Adrenal gland (tissue), 19 donors: ENCODE measurements at regions of chr15 and their contacts with region 1.

Region 1: GRCh38 chr15:80567721-80568157 is 127.4 kb upstream of the ABHD17C start:
- DNase-seq: peak; percentile 54 to 83 (median 65)
- H3K4me3 ChIP-seq: no peak overlapping the region
- H3K27ac ChIP-seq: no peak overlapping the region
- H3K4me1 ChIP-seq: no peaks in the 10 kb centered on the region
- H3K27me3 ChIP-seq: no peaks in the 10 kb centered on the region
- CTCF ChIP-seq: peak; percentile 55 to 81 (median 74)
- POLR2A ChIP-seq: no peak

Region 2: DNA sequence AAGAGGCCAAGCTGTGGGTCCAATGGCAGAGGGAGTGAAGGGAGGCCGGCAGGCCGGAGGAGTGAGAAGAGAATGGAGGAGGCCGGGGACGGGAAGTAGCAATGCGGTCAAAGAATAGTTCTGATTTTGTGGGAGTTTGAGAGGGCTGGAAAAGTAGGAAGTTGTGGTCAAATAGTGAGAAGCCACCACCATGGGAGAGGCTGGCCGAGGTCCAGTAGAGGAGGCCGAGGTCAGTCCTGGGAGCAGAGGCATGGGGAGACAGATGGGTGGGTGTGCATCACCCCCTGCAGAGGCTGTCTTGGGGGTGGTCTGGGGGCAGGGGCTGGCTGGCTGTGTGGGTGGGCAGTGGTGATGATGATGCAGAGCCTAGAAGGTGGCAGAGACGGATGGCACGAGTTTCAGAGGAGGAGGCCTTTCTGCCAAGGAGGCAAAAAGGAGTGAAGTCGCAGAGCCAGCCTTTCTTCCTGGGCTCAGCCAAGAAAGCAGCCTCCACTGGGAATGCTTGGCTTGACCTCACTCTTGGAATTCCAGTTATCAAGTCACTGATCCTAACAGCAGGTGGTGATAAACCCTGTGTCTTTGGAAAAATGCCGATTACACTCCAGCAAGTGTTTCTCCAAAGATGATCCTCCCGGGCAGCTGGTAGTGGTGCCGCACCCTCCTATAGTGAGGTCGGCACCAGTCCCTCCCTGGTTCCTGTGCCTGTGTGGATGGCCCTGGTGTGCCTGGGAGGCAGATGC is 106.2 kb before region 1 on chr15:
- intact Hi-C with region 1: loop called in 1 of 2 experiments (anchors 10 kb)
- DNase-seq: peak in 1 of 7 donors; percentile 27
- H3K4me3 ChIP-seq: no peak overlapping the region
- H3K27ac ChIP-seq: no peak overlapping the region
- H3K4me1 ChIP-seq: no peaks in the 10 kb centered on the region
- H3K27me3 ChIP-seq: no peaks in the 10 kb centered on the region
- CTCF ChIP-seq: no peak
- POLR2A ChIP-seq: no peak

Region 3: GRCh38 chr15:80636675-80637074 is 68.9 kb after region 1 on chr15:
- intact Hi-C with region 1: no loop called
- DNase-seq: no peak
- H3K4me3 ChIP-seq: no peak overlapping the region
- H3K27ac ChIP-seq: no peak overlapping the region
- H3K4me1 ChIP-seq: no peaks in the 10 kb centered on the region
- H3K27me3 ChIP-seq: no peaks in the 10 kb centered on the region
- CTCF ChIP-seq: no peak
- POLR2A ChIP-seq: no peak

Region 4: DNA sequence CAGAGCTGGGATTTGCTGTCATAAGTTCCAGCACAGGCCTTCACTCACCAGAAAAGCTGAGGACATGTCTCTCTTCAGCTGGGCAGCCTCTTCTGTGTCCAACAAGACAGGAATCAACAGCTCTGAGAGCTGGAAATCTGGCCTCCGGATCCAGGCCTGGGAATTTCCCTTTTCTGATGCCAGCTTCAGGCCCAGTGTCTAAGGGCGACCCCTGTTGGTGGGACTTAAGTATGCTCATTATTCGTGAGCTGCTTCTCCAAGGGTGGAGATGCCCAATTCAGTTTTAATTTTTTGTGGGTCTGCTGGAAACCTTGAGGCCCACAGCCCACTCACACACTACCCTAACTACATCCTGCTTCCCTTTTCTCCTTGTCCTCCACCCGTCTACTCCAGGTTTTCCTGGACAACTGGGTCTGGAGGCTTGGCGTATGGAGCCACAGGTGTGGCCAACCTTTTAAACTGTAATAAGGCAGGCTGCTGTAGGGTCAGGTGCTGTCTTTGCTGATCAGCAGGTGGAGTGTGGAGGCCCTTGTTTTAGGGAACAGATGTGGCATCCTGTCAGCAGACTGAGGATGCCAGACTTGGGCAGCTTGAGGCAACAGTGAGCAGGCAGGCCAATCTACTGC is 208.8 kb after region 1 on chr15:
- intact Hi-C with region 1: loop called (anchors 2 to 10 kb)
- DNase-seq: peak; percentile 73 to 90 (median 77)
- H3K4me3 ChIP-seq: no peak overlapping the region
- H3K27ac ChIP-seq: no peak overlapping the region
- H3K4me1 ChIP-seq: peaks cover 5 to 20% of the 10 kb centered on the region in 2 donors
- H3K27me3 ChIP-seq: peaks cover 21% of the 10 kb centered on the region
- CTCF ChIP-seq: peak; percentile 74 to 85 (median 80)
- POLR2A ChIP-seq: no peak